ENCODE measurements at regions of chr4 and their contacts with region 1.

Region 1: GRCh38 chr4:158770671-158771070 is 1.8 kb downstream of the FNIP2 start:
- DNase-seq: no peak
- ATAC-seq: no peak
- H3K4me3 Mint-ChIP-seq: peak overlapping the region; percentile 99
- H3K27ac Mint-ChIP-seq: no peak overlapping the region
- H3K4me1 Mint-ChIP-seq: peaks cover 47% of the 10 kb centered on the region
- H3K27me3 Mint-ChIP-seq: no peaks in the 10 kb centered on the region
- CTCF ChIP-seq: no peak

Region 2: GRCh38 chr4:158809611-158810486 is 39.2 kb after region 1 on chr4:
- CTCF ChIA-PET with region 1: no interaction called
- POLR2A ChIA-PET with region 1: no interaction called
- intact Hi-C with region 1: loop called (anchors 5 kb)
- DNase-seq: peak; percentile 33
- ATAC-seq: peak; percentile 82
- H3K4me3 Mint-ChIP-seq: peak overlapping the region; percentile 61
- H3K27ac Mint-ChIP-seq: peak overlapping the region; percentile 76
- H3K4me1 Mint-ChIP-seq: peaks cover 43% of the 10 kb centered on the region
- H3K27me3 Mint-ChIP-seq: no peaks in the 10 kb centered on the region
- CTCF ChIP-seq: no peak

Region 3: DNA sequence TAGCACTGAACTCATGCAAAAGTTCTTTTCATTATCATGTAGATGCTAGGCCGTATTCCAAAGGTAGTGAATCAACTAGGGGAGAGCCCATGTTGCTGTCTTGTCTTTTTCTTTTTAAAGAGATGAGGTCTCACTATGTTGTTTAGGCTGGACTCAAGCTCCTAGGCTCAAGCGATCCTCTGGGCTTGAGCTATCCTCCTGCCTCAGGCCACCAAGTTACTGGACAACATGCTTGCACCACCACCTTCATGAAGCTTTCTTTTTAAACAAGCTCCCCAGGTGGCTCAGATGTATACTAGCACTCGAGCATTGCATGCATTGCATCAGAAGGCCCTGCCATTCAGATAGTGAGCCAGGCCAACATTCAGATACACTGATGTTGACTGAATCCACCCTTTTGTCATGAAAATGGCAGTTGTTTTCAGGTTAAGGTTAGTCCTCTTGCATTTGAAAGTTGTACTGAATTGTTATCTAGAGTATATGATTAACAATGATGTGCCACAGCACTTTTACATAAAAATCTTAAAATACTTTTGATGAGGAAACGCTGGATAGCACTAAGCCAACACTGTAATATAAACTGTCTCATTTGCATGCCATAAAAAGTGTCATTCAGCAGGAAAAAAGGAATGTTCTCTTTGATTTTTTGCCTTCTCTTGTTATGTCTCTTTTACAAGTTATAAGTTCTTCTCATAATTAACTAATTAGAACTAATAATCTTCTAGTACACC is 74.8 kb after region 1 on chr4:
- CTCF ChIA-PET with region 1: interaction called, 3 read pairs
- POLR2A ChIA-PET with region 1: no interaction called
- intact Hi-C with region 1: loop called (anchors 5 kb)
- DNase-seq: no peak
- ATAC-seq: no peak
- H3K4me3 Mint-ChIP-seq: no peak overlapping the region
- H3K27ac Mint-ChIP-seq: no peak overlapping the region
- H3K4me1 Mint-ChIP-seq: peaks cover 16% of the 10 kb centered on the region
- H3K27me3 Mint-ChIP-seq: no peaks in the 10 kb centered on the region
- CTCF ChIP-seq: no peak

Region 4: DNA sequence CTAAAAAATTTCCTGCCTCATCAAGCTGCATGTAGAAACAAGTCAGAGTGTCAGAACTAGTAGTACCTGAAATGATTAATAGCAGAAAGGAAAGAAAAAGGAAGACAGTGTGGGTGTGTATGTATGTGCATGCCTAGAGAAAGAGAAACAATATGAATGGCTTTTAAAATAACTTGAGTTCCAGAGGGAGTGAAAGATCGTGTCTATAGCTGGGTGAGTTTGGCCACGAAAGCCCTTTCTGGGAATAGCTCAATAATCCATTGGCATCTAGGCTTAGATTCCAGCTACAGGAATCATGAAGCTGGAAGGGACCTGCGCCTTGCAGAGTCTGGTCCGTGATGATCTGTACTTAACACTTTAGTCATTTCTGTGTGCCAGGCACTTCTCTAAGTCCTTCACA is 527.8 kb after region 1 on chr4:
- CTCF ChIA-PET with region 1: no interaction called
- POLR2A ChIA-PET with region 1: no interaction called
- intact Hi-C with region 1: no loop called
- DNase-seq: no peak
- ATAC-seq: no peak
- H3K4me3 Mint-ChIP-seq: no peak overlapping the region
- H3K27ac Mint-ChIP-seq: no peak overlapping the region
- H3K4me1 Mint-ChIP-seq: peaks cover 17% of the 10 kb centered on the region
- H3K27me3 Mint-ChIP-seq: no peaks in the 10 kb centered on the region
- CTCF ChIP-seq: no peak

Measured in activated CD8-positive, alpha-beta T cell treated with anti-CD3 and anti-CD28 coated beads for 36 hours (primary cell).